MCF 10A (cell line): ENCODE measurements at regions of chr22 and their contacts with region 1.

Region 1: DNA sequence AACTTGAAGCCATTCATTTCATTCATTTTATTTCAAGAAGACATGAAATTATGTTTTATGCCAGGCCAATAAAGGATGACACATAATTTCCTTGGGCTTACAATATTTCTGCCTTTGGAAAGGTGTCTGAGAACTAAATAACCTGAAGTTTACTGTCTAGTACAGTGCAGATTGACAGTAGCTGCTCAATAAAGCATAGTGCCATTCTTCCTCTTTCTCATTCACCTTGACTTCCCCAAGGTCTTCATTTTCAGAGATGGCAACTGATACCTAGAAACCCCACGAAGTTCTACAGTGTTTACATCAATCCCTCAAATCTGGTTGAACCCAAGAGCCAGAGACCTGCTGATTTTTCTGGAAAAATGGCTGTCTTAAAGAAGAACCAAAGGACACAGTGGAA is 144.3 kb upstream of the SYN3 start:
- DNase-seq: no peak
- H3K4me3 Mint-ChIP-seq: no peak overlapping the region
- H3K27ac Mint-ChIP-seq: no peak overlapping the region
- H3K4me1 Mint-ChIP-seq: peaks cover 9% of the 10 kb centered on the region
- H3K27me3 Mint-ChIP-seq: peaks cover 43% of the 10 kb centered on the region
- CTCF ChIP-seq: no peak

Region 2: GRCh38 chr22:33006220-33006954 is 196.1 kb before region 1 on chr22:
- CTCF ChIA-PET with region 1: interaction called, 15 read pairs
- POLR2A ChIA-PET with region 1: no interaction called
- intact Hi-C with region 1: no loop called
- DNase-seq: peak; percentile 92
- H3K4me3 Mint-ChIP-seq: peak overlapping the region; percentile 52
- H3K27ac Mint-ChIP-seq: no peak overlapping the region
- H3K4me1 Mint-ChIP-seq: peaks cover 24% of the 10 kb centered on the region
- H3K27me3 Mint-ChIP-seq: no peaks in the 10 kb centered on the region
- CTCF ChIP-seq: no peak

Region 3: DNA sequence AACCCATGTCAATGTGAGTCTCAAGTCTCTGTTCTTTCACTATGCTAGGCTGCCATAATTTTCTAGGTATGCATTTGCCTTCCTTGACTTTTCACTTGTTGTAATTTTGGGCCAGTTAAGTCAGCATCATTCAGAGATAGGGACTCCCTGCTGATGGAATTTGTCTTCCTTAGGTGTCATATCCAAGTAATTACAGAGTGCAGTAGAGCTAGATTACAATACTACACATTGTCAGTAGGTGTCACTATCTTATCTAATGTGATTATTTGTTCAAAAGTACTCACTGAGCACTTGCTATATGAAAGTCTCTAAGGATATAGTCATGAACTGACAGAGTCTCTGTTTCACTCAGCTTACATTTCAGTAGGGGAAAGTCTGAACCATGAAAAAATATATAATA is 119.2 kb before region 1 on chr22:
- CTCF ChIA-PET with region 1: interaction called, 38 read pairs
- POLR2A ChIA-PET with region 1: no interaction called
- intact Hi-C with region 1: loop called (anchors 2 kb)
- DNase-seq: peak; percentile 17
- H3K4me3 Mint-ChIP-seq: no peak overlapping the region
- H3K27ac Mint-ChIP-seq: no peak overlapping the region
- H3K4me1 Mint-ChIP-seq: no peaks in the 10 kb centered on the region
- H3K27me3 Mint-ChIP-seq: peaks cover 38% of the 10 kb centered on the region
- CTCF ChIP-seq: peak; percentile 29

Region 4: GRCh38 chr22:33110562-33111163 is 91.8 kb before region 1 on chr22:
- CTCF ChIA-PET with region 1: interaction called, 12 read pairs
- POLR2A ChIA-PET with region 1: no interaction called
- intact Hi-C with region 1: no loop called
- DNase-seq: peak; percentile 40
- H3K4me3 Mint-ChIP-seq: no peak overlapping the region
- H3K27ac Mint-ChIP-seq: no peak overlapping the region
- H3K4me1 Mint-ChIP-seq: peaks cover 32% of the 10 kb centered on the region
- H3K27me3 Mint-ChIP-seq: no peaks in the 10 kb centered on the region
- CTCF ChIP-seq: no peak

Region 5: GRCh38 chr22:33126881-33127280 is 75.6 kb before region 1 on chr22:
- CTCF ChIA-PET with region 1: interaction called, 15 read pairs
- POLR2A ChIA-PET with region 1: no interaction called
- intact Hi-C with region 1: no loop called
- DNase-seq: peak; percentile 50
- H3K4me3 Mint-ChIP-seq: no peak overlapping the region
- H3K27ac Mint-ChIP-seq: no peak overlapping the region
- H3K4me1 Mint-ChIP-seq: peaks cover 5% of the 10 kb centered on the region
- H3K27me3 Mint-ChIP-seq: no peaks in the 10 kb centered on the region
- CTCF ChIP-seq: peak; percentile 61